HepG2 (cell line): ENCODE measurements at regions of chr19 and their contacts with region 1.

Region 1: DNA sequence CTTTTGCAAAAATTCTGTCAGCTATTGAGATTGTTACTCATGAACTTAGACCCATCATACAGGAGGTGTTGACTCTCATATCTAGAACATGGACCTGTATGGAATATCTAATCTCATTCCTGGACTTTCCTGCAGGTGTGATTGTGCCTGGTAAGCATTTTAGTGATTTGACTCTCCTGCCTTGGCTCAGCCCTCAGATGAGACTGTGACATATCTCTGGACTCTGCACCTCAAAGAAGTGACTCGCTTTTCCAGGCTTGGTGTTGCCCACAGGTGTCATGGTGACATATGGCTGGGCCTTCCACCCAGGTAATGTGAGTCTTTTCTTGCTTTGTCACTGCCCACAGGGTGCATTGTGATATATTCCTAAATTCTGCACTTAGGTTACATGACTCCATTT is 17.8 kb upstream of the ZNF726 start:
- DNase-seq: no peak
- ATAC-seq: no peak
- H3K4me3 ChIP-seq: no peak overlapping the region
- H3K27ac ChIP-seq: no peak overlapping the region
- H3K4me1 ChIP-seq: no peaks in the 10 kb centered on the region
- H3K27me3 ChIP-seq: no peaks in the 10 kb centered on the region
- CTCF ChIP-seq: no peak
- EP300 ChIP-seq: no peak
- POLR2A ChIP-seq: no peak
- RAD21 ChIP-seq: no peak

Region 2: DNA sequence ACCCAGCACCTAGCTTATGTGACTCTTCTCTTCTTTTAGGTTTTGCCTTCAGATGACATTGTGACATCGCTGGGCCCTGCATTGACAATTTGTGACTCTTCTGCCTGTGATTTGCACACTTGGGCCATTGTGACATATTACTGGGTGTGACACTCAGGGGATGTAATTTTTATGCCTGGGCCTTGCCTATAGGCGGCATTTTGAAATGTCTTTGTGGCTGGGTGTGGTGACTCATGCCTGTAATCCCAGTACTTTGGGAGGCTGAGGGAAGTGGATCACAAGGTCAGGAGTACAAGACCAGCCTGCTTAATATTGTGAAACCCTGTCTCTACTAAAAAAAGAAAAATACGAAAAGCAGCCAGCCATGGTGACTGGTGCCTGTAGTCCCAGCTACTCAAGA is 109.8 kb before region 1 on chr19:
- CTCF ChIA-PET with region 1: no interaction called
- POLR2A ChIA-PET with region 1: no interaction called
- in situ Hi-C with region 1: loop called (anchors 5 kb)
- intact Hi-C with region 1: no loop called
- DNase-seq: no peak
- ATAC-seq: no peak
- H3K4me3 ChIP-seq: no peak overlapping the region
- H3K27ac ChIP-seq: no peak overlapping the region
- H3K4me1 ChIP-seq: no peaks in the 10 kb centered on the region
- H3K27me3 ChIP-seq: no peaks in the 10 kb centered on the region; a peak in 1 of 5 replicates
- CTCF ChIP-seq: no peak
- EP300 ChIP-seq: no peak
- POLR2A ChIP-seq: no peak
- RAD21 ChIP-seq: no peak